Colonic mucosa (tissue), 4 donors: ENCODE measurements at regions of chr17 and their contacts with region 1.

Region 1: DNA sequence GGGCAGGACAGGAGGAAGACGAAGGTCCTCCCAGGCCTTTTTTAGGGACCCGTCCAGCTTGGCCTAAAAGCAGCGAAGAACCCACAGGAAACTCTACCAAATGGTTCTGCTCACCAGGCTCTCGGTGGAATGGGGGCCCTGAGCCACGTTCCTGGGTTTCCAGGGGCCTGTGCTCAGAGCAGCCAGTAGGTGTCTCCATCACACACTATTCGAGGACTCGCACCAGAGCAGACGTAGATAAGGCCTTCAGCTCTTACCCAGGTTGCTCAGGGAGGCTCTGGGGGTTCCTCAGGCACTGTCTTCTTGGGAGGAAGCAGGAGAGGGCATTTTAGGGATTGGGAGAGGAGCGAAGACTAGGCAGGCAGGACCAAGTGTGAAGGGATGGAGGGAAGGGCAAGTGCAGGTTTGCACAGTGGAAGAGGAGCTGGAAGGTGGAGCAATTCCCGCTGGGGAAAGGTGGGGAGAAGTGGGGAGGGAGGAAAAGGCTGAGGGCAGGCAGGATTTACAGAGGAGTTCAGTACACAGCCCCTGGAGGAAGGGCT is 157.1 kb downstream of the RGS9 start:
- DNase-seq: peak; percentile 81
- H3K4me3 ChIP-seq: no peak overlapping the region
- H3K27ac ChIP-seq: peak overlapping the region; percentile 72
- H3K4me1 ChIP-seq: peaks cover 9% of the 10 kb centered on the region
- H3K27me3 ChIP-seq: no peaks in the 10 kb centered on the region
- CTCF ChIP-seq: peak; percentile 76

Region 2: GRCh38 chr17:65370669-65371131 is 76.5 kb after region 1 on chr17:
- intact Hi-C with region 1: loop called (anchors 5 kb)
- DNase-seq: peak; percentile 92
- H3K4me3 ChIP-seq: no peak overlapping the region
- H3K27ac ChIP-seq: peak overlapping the region; percentile 82
- H3K4me1 ChIP-seq: no peaks in the 10 kb centered on the region
- H3K27me3 ChIP-seq: no peaks in the 10 kb centered on the region
- CTCF ChIP-seq: no peak